ENCODE measurements at regions of chr3 and their contacts with region 1.

Region 1: DNA sequence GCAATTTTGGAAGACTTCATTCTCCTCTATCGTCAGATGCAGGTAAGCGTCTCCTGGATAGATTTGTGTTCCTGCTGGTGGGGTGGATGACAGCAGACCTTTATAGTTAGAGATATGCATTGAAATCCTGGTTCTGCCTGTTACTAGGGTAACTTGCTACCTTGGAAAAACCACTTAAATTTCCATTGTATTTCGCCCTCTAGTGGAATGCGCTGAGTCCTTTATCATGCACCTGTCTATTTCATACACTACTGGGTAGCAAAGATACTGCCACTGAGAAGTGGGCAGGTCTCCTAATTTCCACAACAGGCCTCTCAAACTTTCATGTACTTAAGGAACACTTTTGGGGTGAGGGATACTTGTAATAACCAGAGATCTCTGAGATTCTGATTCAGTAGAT is 209.5 kb upstream of the SUCLG2 start:
- DNase-seq: peak; percentile 31 to 44
- H3K4me3 ChIP-seq: no peak overlapping the region
- H3K4me3 Mint-ChIP-seq: no peak overlapping the region
- H3K27ac Mint-ChIP-seq: no peak overlapping the region
- H3K4me1 ChIP-seq: no peaks in the 10 kb centered on the region
- H3K4me1 Mint-ChIP-seq: no peaks in the 10 kb centered on the region
- H3K27me3 ChIP-seq: no peaks in the 10 kb centered on the region; the same call in 1 of the 2 replicates
- H3K27me3 Mint-ChIP-seq: no peaks in the 10 kb centered on the region
- CTCF ChIP-seq: peak; percentile 39 to 61

Region 2: DNA sequence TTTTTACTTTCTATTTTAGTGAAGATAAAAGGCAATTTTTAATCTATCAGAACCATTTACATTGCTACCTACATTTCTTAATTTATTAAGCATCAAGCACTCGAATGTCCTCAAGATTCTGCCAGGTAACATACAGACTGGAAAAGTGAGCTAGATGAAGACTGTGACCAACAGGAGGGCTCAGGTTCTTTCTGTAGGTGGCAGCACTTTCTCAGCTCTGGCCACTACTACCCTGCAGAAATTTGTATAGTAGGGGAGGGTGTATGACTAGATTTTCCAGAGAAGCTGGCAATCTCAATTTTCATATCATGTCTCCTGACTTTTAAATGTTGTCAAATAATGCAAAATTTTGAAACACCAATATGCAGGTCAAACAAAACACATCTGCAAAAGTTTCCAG is 44.4 kb before region 1 on chr3:
- CTCF ChIA-PET with region 1: no interaction called
- POLR2A ChIA-PET with region 1: no interaction called
- intact Hi-C with region 1: loop called (anchors 1 kb)
- DNase-seq: peak in 1 of 2 experiments; percentile 9
- H3K4me3 ChIP-seq: no peak overlapping the region
- H3K4me3 Mint-ChIP-seq: no peak overlapping the region
- H3K27ac Mint-ChIP-seq: no peak overlapping the region
- H3K4me1 ChIP-seq: no peaks in the 10 kb centered on the region
- H3K4me1 Mint-ChIP-seq: no peaks in the 10 kb centered on the region
- H3K27me3 ChIP-seq: no peaks in the 10 kb centered on the region
- H3K27me3 Mint-ChIP-seq: no peaks in the 10 kb centered on the region
- CTCF ChIP-seq: peak; percentile 13 to 51

Region 3: GRCh38 chr3:68571321-68571720 is 707.5 kb after region 1 on chr3:
- CTCF ChIA-PET with region 1: no interaction called
- POLR2A ChIA-PET with region 1: no interaction called
- intact Hi-C with region 1: no loop called
- DNase-seq: no peak
- H3K4me3 ChIP-seq: no peak overlapping the region
- H3K4me3 Mint-ChIP-seq: no peak overlapping the region
- H3K27ac Mint-ChIP-seq: no peak overlapping the region
- H3K4me1 ChIP-seq: no peaks in the 10 kb centered on the region
- H3K4me1 Mint-ChIP-seq: no peaks in the 10 kb centered on the region
- H3K27me3 ChIP-seq: no peaks in the 10 kb centered on the region
- H3K27me3 Mint-ChIP-seq: peaks cover 12% of the 10 kb centered on the region
- CTCF ChIP-seq: no peak